Heart right ventricle (tissue), 16 donors: ENCODE measurements at regions of chr22 and their contacts with region 1.

Region 1: GRCh38 chr22:33401291-33401690 is 343.1 kb upstream of the SYN3 start:
- DNase-seq: no peak
- ATAC-seq: no peak
- H3K4me3 ChIP-seq: no peak overlapping the region
- H3K27ac ChIP-seq: no peak overlapping the region
- H3K4me1 ChIP-seq: peaks cover 0 to 30% (median 19%) of the 10 kb centered on the region in 9 donors
- H3K27me3 ChIP-seq: no peaks in the 10 kb centered on the region
- CTCF ChIP-seq: no peak

Region 2: GRCh38 chr22:33372875-33373274 is 28.4 kb before region 1 on chr22:
- intact Hi-C with region 1: no loop called
- DNase-seq: no peak
- ATAC-seq: no peak
- H3K4me3 ChIP-seq: no peak overlapping the region
- H3K27ac ChIP-seq: no peak overlapping the region
- H3K4me1 ChIP-seq: no peaks in the 10 kb centered on the region
- H3K27me3 ChIP-seq: no peaks in the 10 kb centered on the region
- CTCF ChIP-seq: no peak

Region 3: DNA sequence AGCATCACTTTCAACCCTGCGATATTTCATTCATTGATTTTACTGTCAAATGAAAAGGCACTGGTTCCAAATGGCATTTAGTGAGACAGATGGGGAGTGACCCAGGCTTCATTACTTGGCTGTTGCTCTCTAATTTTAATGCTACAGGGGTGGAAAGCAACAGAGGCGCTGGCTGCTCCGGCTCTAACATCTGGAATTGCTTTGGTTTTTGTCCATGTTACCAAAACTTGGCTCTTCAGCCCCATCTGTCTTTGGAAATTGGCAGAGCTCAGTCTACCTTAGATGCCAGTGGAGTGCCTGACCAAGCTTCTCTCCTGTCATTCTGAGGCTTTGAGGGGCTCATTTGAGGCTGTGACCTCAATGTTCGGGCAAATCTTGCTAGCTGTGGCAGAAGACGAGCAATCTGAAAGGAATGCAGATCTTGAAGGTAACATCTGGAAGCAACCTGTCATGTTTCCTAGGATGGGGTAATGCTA is 66.4 kb after region 1 on chr22:
- intact Hi-C with region 1: loop called in 1 of 10 experiments (anchors 10 kb)
- DNase-seq: no peak
- ATAC-seq: peak in 3 of 8 donors; percentile 14 to 51 (median 24)
- H3K4me3 ChIP-seq: no peak overlapping the region
- H3K27ac ChIP-seq: peak overlapping the region in 1 of 10 donors; percentile 34
- H3K4me1 ChIP-seq: peaks cover 4 to 41% (median 30%) of the 10 kb centered on the region in 9 donors
- H3K27me3 ChIP-seq: no peaks in the 10 kb centered on the region
- CTCF ChIP-seq: peak in 6 of 9 donors; percentile 18 to 37 (median 22)

Region 4: GRCh38 chr22:33639588-33640254 is 238.4 kb after region 1 on chr22:
- intact Hi-C with region 1: no loop called
- DNase-seq: no peak
- ATAC-seq: peak in 7 of 8 donors; percentile 17 to 80 (median 64)
- H3K4me3 ChIP-seq: no peak overlapping the region
- H3K27ac ChIP-seq: peak overlapping the region in 5 of 10 donors; percentile 27 to 53 (median 35)
- H3K4me1 ChIP-seq: peaks cover 0 to 23% (median 8%) of the 10 kb centered on the region in 9 donors
- H3K27me3 ChIP-seq: no peaks in the 10 kb centered on the region
- CTCF ChIP-seq: no peak